Activated T-helper 1 cell treated with anti-CD3 and anti-CD28 coated beads, Interleukin-12 subunit alpha, Interleukin-12 subunit beta, Interleukin-2, Interleukin-4 antibody, amounts not matched to agents 30 ng/mL and 10 ng/mL and 1 ng/mL, durations not matched to agents 14 hours and 24 hours and 36 hours (primary cell): ENCODE measurements at regions of chr11 and their contacts with region 1.

Region 1: DNA sequence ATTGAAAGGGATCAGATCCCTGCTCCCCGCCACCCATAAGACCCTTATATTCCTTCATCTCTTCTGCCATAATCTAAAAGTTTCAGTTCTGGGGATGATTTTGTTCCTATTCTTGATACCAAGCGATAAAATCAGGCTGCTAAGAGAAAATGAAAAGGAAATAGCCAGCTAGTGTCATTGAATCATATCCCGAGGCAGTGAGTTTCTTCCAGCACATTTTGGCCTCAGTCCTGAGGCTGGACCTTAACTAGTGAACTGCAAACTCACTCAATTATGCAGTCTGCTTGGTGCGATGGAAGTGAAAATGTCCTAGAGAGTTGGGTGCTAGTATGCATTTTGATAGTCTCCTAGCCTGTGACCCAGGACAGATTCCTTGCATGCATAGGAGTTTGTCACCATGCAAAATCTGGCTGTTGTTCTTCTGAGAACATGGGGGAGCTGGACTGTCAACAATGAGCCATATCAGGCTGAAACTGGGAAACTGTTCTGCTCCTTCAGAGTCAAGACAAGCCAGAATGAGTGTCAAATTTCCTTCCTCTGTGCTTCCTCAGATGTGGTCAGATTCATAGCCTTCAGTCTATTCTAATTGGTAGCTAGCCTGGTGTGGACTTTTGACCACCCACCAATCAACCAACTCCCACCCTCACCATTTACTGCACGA is 102.9 kb downstream of the CCDC81 start:
- DNase-seq: no peak
- H3K4me3 Mint-ChIP-seq: no peak overlapping the region
- H3K27ac Mint-ChIP-seq: no peak overlapping the region
- H3K4me1 Mint-ChIP-seq: peaks cover 12% of the 10 kb centered on the region
- H3K27me3 Mint-ChIP-seq: no peaks in the 10 kb centered on the region

Region 2: GRCh38 chr11:85170226-85170625 is 1307.4 kb before region 1 on chr11:
- intact Hi-C with region 1: no loop called
- DNase-seq: no peak
- H3K4me3 Mint-ChIP-seq: no peak overlapping the region
- H3K27ac Mint-ChIP-seq: no peak overlapping the region
- H3K4me1 Mint-ChIP-seq: no peaks in the 10 kb centered on the region
- H3K27me3 Mint-ChIP-seq: no peaks in the 10 kb centered on the region

Region 3: DNA sequence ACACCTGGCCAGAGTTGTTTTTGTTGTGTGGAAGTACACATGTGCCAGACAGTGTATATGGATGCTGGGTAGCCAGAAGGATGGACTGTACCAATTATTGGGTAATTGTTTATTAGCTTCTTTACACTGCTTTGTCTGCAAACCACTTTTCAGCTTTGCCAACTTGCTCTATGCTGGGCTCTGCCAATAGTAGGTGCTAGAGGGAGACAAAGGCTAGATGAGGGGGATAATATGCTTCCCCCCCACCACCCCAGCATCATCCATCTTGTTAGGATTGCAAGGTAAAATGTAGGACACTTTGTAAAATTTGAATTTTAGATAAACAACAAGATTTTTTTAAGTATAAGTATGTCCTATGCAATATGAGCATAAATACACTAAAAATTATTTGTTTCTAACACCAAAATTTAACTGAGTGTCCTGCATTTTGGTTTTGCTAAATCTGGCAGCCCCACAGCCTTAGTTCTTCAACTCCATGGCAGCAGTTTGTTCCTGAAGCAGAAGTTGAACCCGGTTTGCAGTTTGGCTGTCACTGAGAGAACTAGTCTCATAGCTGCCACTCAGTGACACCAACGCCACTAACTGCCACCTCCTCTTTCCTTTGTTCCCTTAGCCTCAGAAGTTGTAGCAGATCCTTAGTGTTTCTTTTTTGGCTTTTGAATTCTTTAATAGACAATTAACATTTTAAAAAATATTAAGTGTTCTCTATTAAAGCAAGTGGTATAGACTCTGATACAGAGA is 24.2 kb before region 1 on chr11:
- intact Hi-C with region 1: no loop called
- DNase-seq: no peak
- H3K4me3 Mint-ChIP-seq: no peak overlapping the region
- H3K27ac Mint-ChIP-seq: no peak overlapping the region
- H3K4me1 Mint-ChIP-seq: peaks cover 47% of the 10 kb centered on the region
- H3K27me3 Mint-ChIP-seq: no peaks in the 10 kb centered on the region

Region 4: DNA sequence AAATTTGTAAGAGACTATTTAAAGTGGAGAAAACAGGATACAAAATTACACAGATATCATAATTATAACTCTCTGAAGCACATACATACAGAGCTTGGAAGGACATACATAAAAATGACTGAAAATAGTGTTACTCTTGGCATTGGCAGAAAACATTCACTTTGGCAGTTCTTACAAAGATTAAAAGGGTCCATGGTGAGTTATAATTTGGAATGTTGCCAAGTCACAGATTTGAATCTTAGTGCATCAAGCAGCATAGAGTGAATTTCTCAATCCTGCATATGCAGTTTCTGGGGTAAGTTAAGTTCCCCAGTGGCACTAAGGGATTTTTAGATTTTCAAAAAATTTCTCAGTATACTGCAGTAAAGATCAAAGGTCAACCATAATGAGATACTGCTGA is 13.0 kb after region 1 on chr11:
- intact Hi-C with region 1: loop called (anchors 2 kb)
- DNase-seq: no peak
- H3K4me3 Mint-ChIP-seq: no peak overlapping the region
- H3K27ac Mint-ChIP-seq: no peak overlapping the region
- H3K4me1 Mint-ChIP-seq: peaks cover 10% of the 10 kb centered on the region
- H3K27me3 Mint-ChIP-seq: peaks cover 2% of the 10 kb centered on the region

Region 5: DNA sequence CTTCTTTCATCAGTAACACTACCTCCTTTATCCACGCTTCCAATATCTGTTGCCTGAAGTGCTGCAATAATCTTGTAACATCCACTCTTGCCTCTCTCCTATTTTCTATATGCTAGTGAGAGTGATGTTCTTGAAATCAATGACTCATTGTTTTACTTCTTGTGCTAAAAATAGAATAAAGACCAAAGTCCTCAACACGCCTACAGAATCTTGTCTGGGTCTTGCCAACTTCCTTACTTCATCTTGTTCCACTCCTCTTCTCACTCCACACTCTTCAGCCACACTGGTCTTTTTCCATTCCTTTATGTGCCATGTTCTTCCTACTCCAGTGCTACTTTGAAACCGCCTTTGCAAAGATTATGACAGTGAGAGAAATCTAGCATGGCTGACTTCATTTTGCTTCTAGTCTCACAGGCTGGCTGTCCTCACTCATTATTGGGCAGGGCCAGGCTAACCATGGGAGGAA is 33.5 kb after region 1 on chr11:
- intact Hi-C with region 1: no loop called
- DNase-seq: no peak
- H3K4me3 Mint-ChIP-seq: no peak overlapping the region
- H3K27ac Mint-ChIP-seq: no peak overlapping the region
- H3K4me1 Mint-ChIP-seq: no peaks in the 10 kb centered on the region
- H3K27me3 Mint-ChIP-seq: no peaks in the 10 kb centered on the region

Region 6: GRCh38 chr11:86698639-86699400 is 221.2 kb after region 1 on chr11:
- intact Hi-C with region 1: no loop called
- DNase-seq: no peak
- H3K4me3 Mint-ChIP-seq: no peak overlapping the region
- H3K27ac Mint-ChIP-seq: no peak overlapping the region
- H3K4me1 Mint-ChIP-seq: peaks cover 5% of the 10 kb centered on the region
- H3K27me3 Mint-ChIP-seq: peaks cover 3% of the 10 kb centered on the region